ENCODE measurements at regions of chr10 and their contacts with region 1.

Region 1: DNA sequence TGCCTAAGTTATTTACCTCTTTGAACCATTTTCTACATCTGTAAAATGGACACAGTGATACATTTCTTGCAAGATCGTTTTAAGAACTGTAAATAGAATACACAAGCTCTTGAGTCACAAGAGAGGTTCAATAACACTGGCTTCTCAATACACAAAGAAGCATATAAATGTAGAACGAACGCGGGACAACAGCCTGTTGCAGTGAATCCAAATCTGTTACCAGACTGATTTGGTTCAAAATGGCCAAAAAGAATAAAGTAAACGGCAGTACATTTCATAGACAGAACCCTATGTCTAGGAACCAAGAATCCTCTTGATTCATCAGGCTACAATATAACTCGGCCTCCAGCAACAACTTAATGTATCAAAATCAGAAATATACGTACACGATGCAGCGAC is 701 bp downstream of the MTPAP start:
- DNase-seq: no peak
- ATAC-seq: peak; percentile 28
- H3K4me3 Mint-ChIP-seq: peak overlapping the region; percentile 91
- H3K27ac Mint-ChIP-seq: peak overlapping the region; percentile 98
- H3K4me1 Mint-ChIP-seq: peaks cover 38% of the 10 kb centered on the region
- H3K27me3 Mint-ChIP-seq: no peaks in the 10 kb centered on the region

Region 2: DNA sequence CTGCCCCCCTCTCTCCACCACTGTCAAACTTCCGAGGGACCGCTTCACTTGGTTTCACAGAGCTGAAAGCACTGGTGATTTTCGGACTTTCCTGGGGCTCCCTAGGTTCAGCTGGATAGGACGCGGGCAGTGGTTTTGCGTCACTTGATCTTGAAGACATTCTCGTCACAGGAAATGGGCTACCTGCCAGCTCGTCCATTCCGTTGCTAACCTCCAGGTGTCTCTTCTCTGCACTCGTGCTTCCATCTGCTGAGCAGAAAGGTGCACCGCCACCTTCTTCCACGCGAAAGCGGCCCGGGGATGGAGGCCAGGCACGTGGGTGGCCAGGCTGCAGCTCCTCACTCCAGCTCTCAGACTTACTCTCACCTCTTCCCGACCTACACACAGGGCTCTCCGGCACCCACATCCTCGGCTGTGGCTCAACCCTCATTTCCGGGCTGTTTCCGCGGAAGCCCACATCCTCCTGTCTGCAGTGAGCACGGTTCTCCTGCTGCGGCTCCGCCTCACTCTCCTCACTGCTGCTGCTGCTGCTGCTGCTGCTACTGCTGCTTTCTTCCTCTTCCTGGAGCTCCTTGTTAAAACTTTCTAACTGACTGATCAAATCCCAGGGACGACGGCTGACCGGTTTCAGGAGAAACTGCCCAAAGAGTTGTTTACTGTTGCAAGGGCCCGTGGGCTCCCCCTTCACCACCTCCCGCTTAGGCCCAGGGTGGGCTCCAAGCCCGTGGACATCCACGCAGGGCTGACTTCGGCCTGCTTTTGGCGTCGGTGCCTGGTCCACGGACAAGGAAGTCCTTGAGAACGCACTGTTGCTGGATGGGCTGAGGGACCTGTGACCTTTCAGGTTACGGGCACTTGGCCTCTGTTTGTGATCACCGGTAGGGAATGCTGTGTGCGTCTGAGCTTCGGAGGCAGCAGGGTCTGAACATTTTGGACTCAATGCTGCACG is 321.0 kb before region 1 on chr10:
- CTCF ChIA-PET with region 1: no interaction called
- POLR2A ChIA-PET with region 1: no interaction called
- intact Hi-C with region 1: loop called in 1 of 2 experiments (anchors 5 kb)
- DNase-seq: peak; percentile 92
- ATAC-seq: peak; percentile 98
- H3K4me3 Mint-ChIP-seq: peak overlapping the region; percentile 66
- H3K27ac Mint-ChIP-seq: peak overlapping the region; percentile 81
- H3K4me1 Mint-ChIP-seq: peaks cover 34% of the 10 kb centered on the region
- H3K27me3 Mint-ChIP-seq: peaks cover 46% of the 10 kb centered on the region

Region 3: GRCh38 chr10:30359373-30360206 is 11.2 kb after region 1 on chr10:
- CTCF ChIA-PET with region 1: interaction called, 26 read pairs
- POLR2A ChIA-PET with region 1: no interaction called
- intact Hi-C with region 1: no loop called
- DNase-seq: peak; percentile 80
- ATAC-seq: peak; percentile 94
- H3K4me3 Mint-ChIP-seq: no peak overlapping the region
- H3K27ac Mint-ChIP-seq: no peak overlapping the region
- H3K4me1 Mint-ChIP-seq: peaks cover 3% of the 10 kb centered on the region
- H3K27me3 Mint-ChIP-seq: no peaks in the 10 kb centered on the region

Region 4: DNA sequence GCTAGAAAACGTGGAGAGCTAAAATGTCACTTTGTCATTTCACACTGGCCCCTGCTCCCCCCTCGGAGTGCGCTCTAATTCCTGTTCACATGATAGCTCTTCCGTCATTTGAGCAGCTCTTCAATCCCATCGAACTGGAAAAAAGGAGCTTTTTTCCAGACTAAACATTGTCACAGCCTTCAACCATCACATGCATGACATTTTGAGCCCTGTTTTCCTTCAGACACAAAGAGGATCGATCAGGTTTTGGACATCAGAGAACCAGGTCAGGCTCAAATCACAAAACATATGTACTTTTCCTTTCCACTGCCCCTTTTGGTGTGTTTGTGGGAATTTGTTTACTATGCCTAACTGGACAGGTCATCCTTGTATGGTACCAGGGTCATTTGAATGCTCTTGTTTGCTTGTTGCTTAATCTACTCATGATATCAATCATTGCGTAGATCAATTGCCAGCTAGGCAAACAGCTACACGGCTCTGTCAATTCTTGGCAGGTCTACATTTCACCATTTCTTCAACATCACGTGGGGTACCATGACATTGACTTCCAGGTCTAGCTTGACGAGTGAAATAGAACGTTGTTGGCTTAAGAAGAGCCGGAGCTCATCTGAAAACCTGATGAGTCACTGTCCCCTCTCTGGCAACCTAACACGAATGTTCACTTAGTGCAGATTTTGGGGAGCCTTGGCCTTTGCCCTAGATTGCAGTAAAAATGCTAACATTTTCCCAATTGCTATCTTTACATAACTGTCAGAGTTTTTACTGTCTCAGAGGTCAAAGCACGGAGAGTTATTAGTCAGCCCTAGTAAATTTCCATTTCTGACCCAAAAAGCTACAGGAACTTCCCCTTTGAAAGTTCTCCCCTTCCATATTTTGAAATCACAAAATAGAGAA is 193.9 kb after region 1 on chr10:
- CTCF ChIA-PET with region 1: no interaction called
- POLR2A ChIA-PET with region 1: no interaction called
- intact Hi-C with region 1: no loop called
- DNase-seq: no peak
- ATAC-seq: peak; percentile 44
- H3K4me3 Mint-ChIP-seq: no peak overlapping the region
- H3K27ac Mint-ChIP-seq: no peak overlapping the region
- H3K4me1 Mint-ChIP-seq: peaks cover 14% of the 10 kb centered on the region
- H3K27me3 Mint-ChIP-seq: peaks cover 2% of the 10 kb centered on the region

Measured in activated CD4-positive, alpha-beta T cell treated with anti-CD3 and anti-CD28 coated beads for 36 hours (primary cell).